ENCODE measurements at regions of chr6 and their contacts with region 1.

Region 1: DNA sequence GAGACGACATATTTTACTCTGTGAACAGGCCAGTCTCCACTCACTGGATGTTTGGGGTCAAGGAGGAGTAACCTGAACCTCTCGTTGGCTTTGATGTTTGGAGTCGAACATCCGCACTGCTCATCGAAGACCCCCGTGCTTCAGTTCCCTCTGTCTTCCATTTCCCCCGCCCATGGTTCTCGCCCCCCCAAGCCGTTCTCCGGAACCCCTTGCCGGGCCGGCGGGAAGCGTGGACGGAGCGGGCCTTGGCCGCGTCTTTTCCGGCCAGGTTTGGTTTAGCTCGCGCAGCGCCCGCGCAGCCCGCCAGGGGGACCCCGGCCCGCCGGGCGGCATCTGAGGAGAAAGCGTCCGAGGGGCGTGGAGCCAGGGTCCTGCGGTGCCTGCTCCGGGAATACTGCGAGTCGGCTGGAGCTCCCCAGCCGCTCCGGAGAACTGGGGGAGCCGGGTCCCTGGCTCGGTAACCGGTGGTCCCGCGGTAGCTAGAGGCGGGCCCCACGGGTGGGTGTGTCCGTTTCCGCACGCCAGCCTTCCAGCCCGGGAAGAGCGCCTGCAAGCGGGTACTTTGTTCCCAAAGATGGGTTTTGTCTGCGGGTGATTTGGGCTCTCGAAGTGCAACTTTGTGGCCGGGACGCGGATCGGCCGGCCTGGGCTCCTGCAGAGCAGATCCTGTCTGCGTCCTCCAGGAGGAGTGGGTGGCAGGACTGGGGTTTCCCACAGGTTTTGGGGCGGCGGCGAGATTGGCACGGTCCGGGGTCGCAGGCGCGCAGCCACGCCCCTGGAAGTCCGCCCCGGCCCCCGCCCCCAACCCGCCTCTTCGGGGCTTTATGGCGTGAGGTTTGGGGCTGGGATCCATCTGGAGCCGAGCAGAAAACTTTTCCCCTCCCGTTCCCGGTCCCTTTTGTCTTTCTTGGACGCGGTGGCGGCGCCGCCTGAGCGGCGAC is at the start of gene TMEM200A:
- DNase-seq: peak; percentile 40
- ATAC-seq: peak; percentile 95
- H3K4me3 ChIP-seq: peak within 1 kb of the TSS; percentile 55 to 73 (median 56)
- H3K27ac ChIP-seq: no peak within 1 kb of the TSS
- H3K4me1 ChIP-seq: peaks cover 9% of the 10 kb centered on the region
- H3K27me3 ChIP-seq: peaks cover 2 to 34% of the 10 kb centered on the region in 2 experiments; a peak in 4 of 5 replicates
- CTCF ChIP-seq: peak; percentile 84
- EP300 ChIP-seq: no peak
- POLR2A ChIP-seq: no peak
- RAD21 ChIP-seq: peak; percentile 85
- total RNA-seq, gene TMEM200A: not detected in 2 replicates

Region 2: GRCh38 chr6:130526466-130526865 is 161.0 kb after region 1 on chr6:
- CTCF ChIA-PET with region 1: no interaction called
- POLR2A ChIA-PET with region 1: no interaction called
- in situ Hi-C with region 1: no loop called
- intact Hi-C with region 1: no loop called
- DNase-seq: no peak
- ATAC-seq: no peak
- H3K4me3 ChIP-seq: no peak overlapping the region
- H3K27ac ChIP-seq: no peak overlapping the region
- H3K4me1 ChIP-seq: no peaks in the 10 kb centered on the region
- H3K27me3 ChIP-seq: no peaks in the 10 kb centered on the region; a peak in 1 of 5 replicates
- CTCF ChIP-seq: no peak
- EP300 ChIP-seq: no peak
- POLR2A ChIP-seq: no peak
- RAD21 ChIP-seq: no peak

Region 3: DNA sequence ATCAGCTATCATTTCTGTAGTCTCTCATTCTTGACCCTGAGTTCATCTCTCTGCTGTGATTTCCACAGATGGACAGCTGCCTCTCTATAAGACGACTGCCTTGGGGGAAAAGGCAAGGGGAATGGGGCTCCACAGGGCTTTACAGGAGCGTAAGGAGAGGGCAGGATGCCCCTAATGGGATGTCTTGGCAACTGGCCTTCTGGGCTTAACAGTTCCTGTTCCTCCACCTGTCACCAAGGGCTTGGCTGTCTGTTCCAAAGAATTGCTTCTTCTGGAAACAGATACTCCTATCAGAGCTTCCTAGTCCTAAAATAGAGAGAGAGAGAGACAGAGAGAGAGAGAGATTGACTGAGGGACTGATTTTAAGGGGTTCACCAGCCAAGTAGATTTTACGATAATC is 182.3 kb after region 1 on chr6:
- CTCF ChIA-PET with region 1: no interaction called
- POLR2A ChIA-PET with region 1: no interaction called
- in situ Hi-C with region 1: no loop called
- intact Hi-C with region 1: no loop called
- DNase-seq: no peak
- ATAC-seq: no peak
- H3K4me3 ChIP-seq: no peak overlapping the region
- H3K27ac ChIP-seq: no peak overlapping the region
- H3K4me1 ChIP-seq: no peaks in the 10 kb centered on the region
- H3K27me3 ChIP-seq: no peaks in the 10 kb centered on the region
- CTCF ChIP-seq: no peak
- EP300 ChIP-seq: no peak
- POLR2A ChIP-seq: no peak
- RAD21 ChIP-seq: no peak

Region 4: DNA sequence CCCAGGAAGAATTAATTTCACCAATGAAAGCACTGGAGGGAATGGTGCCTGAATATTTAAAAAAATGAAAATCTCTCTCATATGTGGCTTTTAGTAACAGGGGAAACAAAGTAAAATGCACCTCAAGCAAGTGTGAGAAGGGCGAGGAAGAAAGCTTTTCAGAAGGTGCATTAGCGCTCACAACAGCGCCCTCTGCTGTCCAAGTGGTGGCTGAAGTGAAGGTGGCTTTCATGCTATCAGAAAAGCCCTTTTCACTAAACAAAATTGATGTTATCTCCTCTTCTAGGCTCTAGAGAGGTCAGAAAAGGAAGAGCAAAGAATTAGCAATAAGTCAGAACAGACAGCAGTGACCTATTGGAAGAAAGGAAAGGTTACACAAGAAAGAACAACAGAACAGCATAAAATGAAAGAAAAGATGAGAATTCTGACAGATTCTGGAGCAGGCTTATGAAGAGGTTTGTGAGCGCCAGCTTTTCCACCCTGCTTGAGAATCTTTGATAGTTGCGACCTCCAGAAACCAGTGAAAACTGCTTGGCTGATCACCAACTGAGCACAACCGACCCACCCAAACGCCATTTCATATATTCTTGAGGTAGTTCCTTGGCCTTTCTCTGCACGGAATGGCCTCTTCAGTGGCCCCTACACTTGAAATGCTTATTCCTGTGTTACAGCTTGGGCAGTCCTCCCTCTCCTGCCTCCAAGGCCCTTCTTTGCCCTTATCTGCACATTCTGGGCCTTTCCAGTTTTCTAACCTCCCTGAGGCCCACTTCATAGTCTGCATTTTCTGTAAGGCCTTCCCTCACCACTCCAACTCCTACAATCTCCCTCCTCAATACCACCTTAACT is 507.0 kb after region 1 on chr6:
- CTCF ChIA-PET with region 1: no interaction called
- POLR2A ChIA-PET with region 1: no interaction called
- in situ Hi-C with region 1: no loop called
- intact Hi-C with region 1: loop called (anchors 5 kb)
- DNase-seq: peak; percentile 62
- ATAC-seq: peak; percentile 86
- H3K4me3 ChIP-seq: no peak overlapping the region
- H3K27ac ChIP-seq: peak overlapping the region; percentile 0
- H3K4me1 ChIP-seq: peaks cover 10% of the 10 kb centered on the region; the same call in 1 of the 2 replicates
- H3K27me3 ChIP-seq: no peaks in the 10 kb centered on the region
- CTCF ChIP-seq: peak; percentile 94
- EP300 ChIP-seq: no peak
- POLR2A ChIP-seq: no peak
- RAD21 ChIP-seq: peak; percentile 77

Measured in HepG2 (cell line).